ENCODE measurements at regions of chr10 and their contacts with region 1.

Region 1: DNA sequence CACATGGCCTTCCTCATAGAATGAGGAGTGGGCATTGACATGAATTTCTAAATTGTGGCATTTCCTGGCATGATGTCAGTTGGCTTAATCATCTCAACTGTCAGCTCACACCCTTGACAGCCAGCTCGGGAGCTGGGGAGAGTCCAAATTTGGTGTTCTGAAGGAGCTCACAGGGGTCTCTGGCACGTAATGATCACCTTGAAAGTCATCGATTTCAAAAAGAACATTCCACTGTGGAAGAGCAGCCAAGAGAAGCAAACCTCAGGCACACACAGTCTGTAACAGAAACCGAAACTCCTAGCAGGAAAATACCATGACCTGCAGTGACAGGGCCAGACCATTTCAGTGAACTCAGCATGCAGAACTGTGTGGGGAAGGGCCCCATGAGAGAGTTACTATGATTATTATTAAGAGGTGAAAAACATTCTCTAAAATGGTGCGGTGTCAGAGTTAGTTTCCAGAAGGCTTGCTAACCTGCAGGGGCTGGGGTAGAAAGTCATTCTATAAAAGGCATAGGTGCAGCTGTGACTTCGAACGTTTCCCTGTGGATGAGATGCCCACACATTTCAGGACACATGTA is 26.4 kb upstream of the KLF6 start:
- DNase-seq: peak in 1 of 2 experiments; percentile 35
- H3K4me3 ChIP-seq: no peak overlapping the region; the same call in 1 of the 2 replicates
- H3K27ac ChIP-seq: peak overlapping the region; percentile 96
- H3K4me1 ChIP-seq: peaks cover 53% of the 10 kb centered on the region
- H3K27me3 ChIP-seq: no peaks in the 10 kb centered on the region
- CTCF ChIP-seq: no peak

Region 2: GRCh38 chr10:3648170-3648569 is 163.2 kb before region 1 on chr10:
- CTCF ChIA-PET with region 1: no interaction called
- POLR2A ChIA-PET with region 1: interaction called, 14 read pairs
- intact Hi-C with region 1: no loop called
- DNase-seq: no peak
- H3K4me3 ChIP-seq: no peak overlapping the region
- H3K27ac ChIP-seq: no peak overlapping the region
- H3K4me1 ChIP-seq: no peaks in the 10 kb centered on the region
- H3K27me3 ChIP-seq: no peaks in the 10 kb centered on the region
- CTCF ChIP-seq: no peak

Region 3: DNA sequence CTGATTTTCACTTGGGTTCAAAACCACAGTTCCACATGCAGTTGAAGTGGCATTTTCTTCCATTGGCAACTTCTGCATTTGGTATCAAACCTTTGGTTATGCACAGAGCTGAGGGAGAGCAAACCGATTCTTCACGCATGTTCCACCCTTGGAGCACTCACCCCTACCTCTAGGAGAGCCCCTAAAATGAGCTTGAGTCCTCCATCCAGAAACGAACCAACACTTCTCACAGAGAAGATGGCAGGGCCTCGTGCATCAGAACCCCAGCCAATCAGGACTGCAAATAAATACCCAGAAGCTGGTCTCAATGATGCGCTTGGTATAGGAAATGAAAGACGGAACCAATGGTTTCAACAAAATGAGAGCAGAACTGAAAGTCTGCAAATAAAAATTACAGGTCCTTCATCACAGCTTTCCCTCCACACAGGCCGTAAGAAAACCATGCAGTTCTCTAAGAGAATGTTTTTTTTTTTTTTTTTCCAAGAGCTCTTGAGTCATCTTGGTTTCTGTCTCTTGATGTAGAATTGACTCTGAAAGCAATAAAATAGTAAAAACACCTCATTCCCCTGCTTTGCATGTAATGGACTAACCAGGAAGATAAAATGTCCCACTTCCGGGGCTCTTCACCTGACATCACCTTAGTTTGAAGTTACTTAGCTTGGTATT is 50.2 kb before region 1 on chr10:
- CTCF ChIA-PET with region 1: no interaction called
- POLR2A ChIA-PET with region 1: interaction called, 5 read pairs
- intact Hi-C with region 1: loop called (anchors 2 kb)
- DNase-seq: peak in 1 of 2 experiments; percentile 53
- H3K4me3 ChIP-seq: 0 out of 2 replicates have a peak overlapping the region, but pooled peaks have one; percentile 12
- H3K27ac ChIP-seq: peak overlapping the region; percentile 100
- H3K4me1 ChIP-seq: peaks cover 89% of the 10 kb centered on the region
- H3K27me3 ChIP-seq: no peaks in the 10 kb centered on the region
- CTCF ChIP-seq: no peak

Region 4: DNA sequence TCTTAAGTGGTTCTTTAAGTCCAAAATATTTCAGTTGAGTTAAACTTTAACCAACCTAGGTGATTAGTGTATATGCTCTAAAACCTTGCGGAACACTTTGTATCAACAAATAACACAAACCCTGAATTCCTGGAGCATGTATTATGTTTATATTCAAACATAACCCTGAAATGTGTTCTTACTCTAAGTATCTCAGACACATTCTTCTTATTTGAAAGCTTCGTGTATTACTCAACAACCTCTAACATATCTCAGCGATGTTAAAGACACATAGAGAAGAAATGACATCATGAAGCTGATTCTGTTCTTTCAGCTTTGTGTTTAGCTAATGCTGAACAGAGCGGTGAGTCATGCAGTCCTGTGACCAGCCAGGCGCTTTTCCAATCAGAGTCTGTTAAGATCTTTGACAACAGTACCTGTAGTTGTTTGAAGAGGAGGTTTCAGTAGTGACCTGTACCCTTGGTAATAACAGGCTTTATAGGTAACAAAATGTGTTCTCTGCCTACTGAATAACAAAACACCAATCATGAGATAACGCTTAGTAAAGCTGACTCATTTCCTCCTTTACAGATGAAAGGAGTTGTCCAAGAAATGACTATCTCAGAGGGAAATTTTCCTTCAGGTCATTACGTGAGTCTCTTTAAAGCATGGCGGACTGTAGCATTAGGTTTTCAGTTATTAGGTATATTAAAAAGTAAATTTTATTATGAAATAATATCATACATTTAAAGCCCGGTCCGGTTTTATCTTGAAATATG is 40.9 kb after region 1 on chr10:
- CTCF ChIA-PET with region 1: no interaction called
- POLR2A ChIA-PET with region 1: interaction called, 6 read pairs
- intact Hi-C with region 1: loop called (anchors 1 kb)
- DNase-seq: peak; percentile 74 to 99
- H3K4me3 ChIP-seq: peak overlapping the region; percentile 16; the same call in 1 of the 2 replicates
- H3K27ac ChIP-seq: peak overlapping the region; percentile 96
- H3K4me1 ChIP-seq: peaks cover 28% of the 10 kb centered on the region
- H3K27me3 ChIP-seq: no peaks in the 10 kb centered on the region
- CTCF ChIP-seq: no peak

Region 5: DNA sequence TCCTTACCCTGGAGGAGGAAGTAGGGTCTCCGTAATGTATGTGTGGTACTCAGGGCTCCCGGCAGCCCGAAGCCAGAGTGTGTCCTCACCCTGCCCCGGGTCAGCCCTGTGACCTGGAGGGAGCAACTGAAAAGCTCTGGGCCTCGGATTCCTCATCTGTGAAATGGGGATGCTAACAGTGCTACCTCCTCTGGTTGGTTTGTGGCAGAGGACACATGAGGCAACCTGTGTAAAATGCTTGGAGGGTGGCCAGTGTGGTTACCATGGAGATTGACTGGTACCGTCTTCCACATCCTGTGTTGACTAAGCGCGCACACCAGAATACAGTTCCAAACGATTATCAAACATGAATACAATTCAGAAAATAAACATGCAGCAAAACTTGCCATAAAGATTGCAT is 137.5 kb after region 1 on chr10:
- CTCF ChIA-PET with region 1: no interaction called
- POLR2A ChIA-PET with region 1: no interaction called
- intact Hi-C with region 1: loop called (anchors 1 kb)
- DNase-seq: no peak
- H3K4me3 ChIP-seq: no peak overlapping the region
- H3K27ac ChIP-seq: no peak overlapping the region
- H3K4me1 ChIP-seq: peaks cover 23% of the 10 kb centered on the region
- H3K27me3 ChIP-seq: no peaks in the 10 kb centered on the region
- CTCF ChIP-seq: no peak